ENCODE measurements at regions of chr1 and their contacts with region 1.

Region 1: GRCh38 chr1:111448918-111449702 is at the starts of genes ATP5PB and WDR77:
- DNase-seq: peak; percentile 73 to 99 (median 84)
- ATAC-seq: peak; percentile 95
- H3K4me3 ChIP-seq: peak within 1 kb of the TSS; percentile 75
- H3K4me3 Mint-ChIP-seq: peak within 1 kb of the TSS; percentile 97
- H3K27ac ChIP-seq: peak within 1 kb of the TSS; percentile 75 to 93
- H3K27ac Mint-ChIP-seq: peak within 1 kb of the TSS; percentile 97
- H3K4me1 ChIP-seq: peaks cover 44% of the 10 kb centered on the region
- H3K4me1 Mint-ChIP-seq: peaks cover 92% of the 10 kb centered on the region
- H3K27me3 ChIP-seq: no peaks in the 10 kb centered on the region
- H3K27me3 Mint-ChIP-seq: no peaks in the 10 kb centered on the region
- CTCF ChIP-seq: no peak
- total RNA-seq, gene ATP5PB: 47.3 to 51.5 TPM
- total RNA-seq, gene WDR77: 12.4 to 15.1 TPM

Region 2: DNA sequence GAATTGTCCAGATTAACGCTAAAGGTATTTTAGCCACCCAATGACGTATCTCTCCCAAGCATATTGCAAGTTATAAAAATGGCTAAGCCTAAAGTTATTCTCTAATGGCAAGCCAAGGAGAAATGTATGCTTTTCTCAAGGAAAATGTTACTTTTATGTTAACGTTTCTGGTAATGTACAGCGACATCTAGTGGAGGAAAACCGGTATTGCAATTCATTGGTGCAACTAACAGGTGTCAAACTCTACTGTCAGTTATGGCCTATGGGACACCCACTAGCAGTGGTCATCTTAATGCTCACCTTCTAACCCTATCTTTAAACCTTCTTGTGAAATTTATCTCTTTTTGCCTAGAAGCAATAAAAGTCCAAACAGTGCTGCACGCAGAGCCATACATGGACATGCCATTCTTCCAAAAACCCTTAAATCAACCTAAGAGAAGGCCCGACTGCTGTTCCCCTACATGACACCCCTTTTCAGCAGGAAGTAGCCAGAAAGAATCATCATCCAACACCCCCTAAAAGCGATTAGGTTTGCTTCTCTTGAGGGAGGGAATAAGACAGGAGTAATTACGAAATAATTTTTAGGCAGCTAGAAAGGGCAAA is 416.7 kb before region 1 on chr1:
- CTCF ChIA-PET with region 1: no interaction called
- POLR2A ChIA-PET with region 1: no interaction called
- intact Hi-C with region 1: no loop called
- DNase-seq: peak in 10 of 14 experiments; percentile 4 to 74 (median 25)
- ATAC-seq: peak; percentile 43
- H3K4me3 ChIP-seq: no peak overlapping the region
- H3K4me3 Mint-ChIP-seq: no peak overlapping the region
- H3K27ac ChIP-seq: no peak overlapping the region
- H3K27ac Mint-ChIP-seq: no peak overlapping the region
- H3K4me1 ChIP-seq: no peaks in the 10 kb centered on the region
- H3K4me1 Mint-ChIP-seq: peaks cover 5% of the 10 kb centered on the region
- H3K27me3 ChIP-seq: peaks cover 0 to 3% of the 10 kb centered on the region in 2 experiments
- H3K27me3 Mint-ChIP-seq: peaks cover 35% of the 10 kb centered on the region
- CTCF ChIP-seq: peak; percentile 94

Region 3: GRCh38 chr1:111346089-111346885 is 102.8 kb before region 1 on chr1:
- CTCF ChIA-PET with region 1: no interaction called
- POLR2A ChIA-PET with region 1: no interaction called
- intact Hi-C with region 1: loop called in 1 of 2 experiments (anchors 10 kb)
- DNase-seq: peak; percentile 76 to 97 (median 86)
- ATAC-seq: peak; percentile 88
- H3K4me3 ChIP-seq: peak overlapping the region; percentile 71
- H3K4me3 Mint-ChIP-seq: peak overlapping the region; percentile 88
- H3K27ac ChIP-seq: peak overlapping the region; percentile 43 to 73
- H3K27ac Mint-ChIP-seq: peak overlapping the region; percentile 85
- H3K4me1 ChIP-seq: peaks cover 14% of the 10 kb centered on the region
- H3K4me1 Mint-ChIP-seq: peaks cover 29% of the 10 kb centered on the region
- H3K27me3 ChIP-seq: no peaks in the 10 kb centered on the region
- H3K27me3 Mint-ChIP-seq: no peaks in the 10 kb centered on the region
- CTCF ChIP-seq: peak; percentile 30

Region 4: DNA sequence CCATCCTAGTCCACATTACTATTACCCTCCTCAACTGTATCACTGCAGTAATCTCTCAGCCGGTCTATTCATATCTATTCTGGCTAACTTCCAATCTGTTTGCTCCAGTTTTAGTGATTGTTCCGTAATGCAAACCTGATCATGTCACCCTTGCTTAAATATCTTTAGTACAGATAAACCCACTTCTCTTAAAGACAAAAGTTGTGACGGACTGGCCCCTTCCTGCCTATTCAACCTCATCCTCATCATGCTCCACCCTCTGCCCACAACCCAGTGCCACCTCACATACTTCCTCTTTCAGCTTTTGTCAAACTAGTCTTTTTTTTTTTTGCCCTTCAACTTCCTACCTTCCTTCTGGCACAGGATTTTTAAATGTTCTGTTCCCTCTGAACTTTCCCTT is 21.9 kb after region 1 on chr1:
- CTCF ChIA-PET with region 1: interaction called, 5 read pairs
- POLR2A ChIA-PET with region 1: interaction called, 28 read pairs
- intact Hi-C with region 1: loop called (anchors 2 kb)
- DNase-seq: peak; percentile 40 to 94 (median 62)
- ATAC-seq: peak; percentile 92
- H3K4me3 ChIP-seq: peak overlapping the region; percentile 38
- H3K4me3 Mint-ChIP-seq: no peak overlapping the region
- H3K27ac ChIP-seq: peak overlapping the region; percentile 75 to 84
- H3K27ac Mint-ChIP-seq: no peak overlapping the region
- H3K4me1 ChIP-seq: peaks cover 57% of the 10 kb centered on the region
- H3K4me1 Mint-ChIP-seq: peaks cover 24% of the 10 kb centered on the region
- H3K27me3 ChIP-seq: no peaks in the 10 kb centered on the region
- H3K27me3 Mint-ChIP-seq: no peaks in the 10 kb centered on the region
- CTCF ChIP-seq: no peak

Region 5: GRCh38 chr1:111656086-111657017 is 207.2 kb after region 1 on chr1:
- CTCF ChIA-PET with region 1: no interaction called
- POLR2A ChIA-PET with region 1: no interaction called
- intact Hi-C with region 1: loop called in 1 of 2 experiments (anchors 5 kb)
- DNase-seq: peak in 4 of 14 experiments; percentile 36 to 69 (median 57)
- ATAC-seq: no peak
- H3K4me3 ChIP-seq: no peak overlapping the region
- H3K4me3 Mint-ChIP-seq: peak overlapping the region; percentile 18
- H3K27ac ChIP-seq: no peak overlapping the region
- H3K27ac Mint-ChIP-seq: peak overlapping the region; percentile 13
- H3K4me1 ChIP-seq: peaks cover 30% of the 10 kb centered on the region
- H3K4me1 Mint-ChIP-seq: peaks cover 56% of the 10 kb centered on the region
- H3K27me3 ChIP-seq: no peaks in the 10 kb centered on the region
- H3K27me3 Mint-ChIP-seq: no peaks in the 10 kb centered on the region
- CTCF ChIP-seq: peak; percentile 64

Measured in CD4-positive, alpha-beta T cell (primary cell).